ENCODE measurements at regions of chr3 and their contacts with region 1.

Region 1: GRCh38 chr3:188006726-188007393 is 147.1 kb upstream of the LPP start:
- DNase-seq: peak; percentile 57
- ATAC-seq: peak; percentile 96
- H3K4me3 ChIP-seq: no peak overlapping the region
- H3K4me3 Mint-ChIP-seq: no peak overlapping the region
- H3K27ac ChIP-seq: no peak overlapping the region
- H3K27ac Mint-ChIP-seq: no peak overlapping the region
- H3K4me1 ChIP-seq: peaks cover 7 to 8% of the 10 kb centered on the region in 2 donors
- H3K4me1 Mint-ChIP-seq: peaks cover 7% of the 10 kb centered on the region
- H3K27me3 ChIP-seq: no peaks in the 10 kb centered on the region
- H3K27me3 Mint-ChIP-seq: no peaks in the 10 kb centered on the region
- CTCF ChIP-seq: no peak

Region 2: DNA sequence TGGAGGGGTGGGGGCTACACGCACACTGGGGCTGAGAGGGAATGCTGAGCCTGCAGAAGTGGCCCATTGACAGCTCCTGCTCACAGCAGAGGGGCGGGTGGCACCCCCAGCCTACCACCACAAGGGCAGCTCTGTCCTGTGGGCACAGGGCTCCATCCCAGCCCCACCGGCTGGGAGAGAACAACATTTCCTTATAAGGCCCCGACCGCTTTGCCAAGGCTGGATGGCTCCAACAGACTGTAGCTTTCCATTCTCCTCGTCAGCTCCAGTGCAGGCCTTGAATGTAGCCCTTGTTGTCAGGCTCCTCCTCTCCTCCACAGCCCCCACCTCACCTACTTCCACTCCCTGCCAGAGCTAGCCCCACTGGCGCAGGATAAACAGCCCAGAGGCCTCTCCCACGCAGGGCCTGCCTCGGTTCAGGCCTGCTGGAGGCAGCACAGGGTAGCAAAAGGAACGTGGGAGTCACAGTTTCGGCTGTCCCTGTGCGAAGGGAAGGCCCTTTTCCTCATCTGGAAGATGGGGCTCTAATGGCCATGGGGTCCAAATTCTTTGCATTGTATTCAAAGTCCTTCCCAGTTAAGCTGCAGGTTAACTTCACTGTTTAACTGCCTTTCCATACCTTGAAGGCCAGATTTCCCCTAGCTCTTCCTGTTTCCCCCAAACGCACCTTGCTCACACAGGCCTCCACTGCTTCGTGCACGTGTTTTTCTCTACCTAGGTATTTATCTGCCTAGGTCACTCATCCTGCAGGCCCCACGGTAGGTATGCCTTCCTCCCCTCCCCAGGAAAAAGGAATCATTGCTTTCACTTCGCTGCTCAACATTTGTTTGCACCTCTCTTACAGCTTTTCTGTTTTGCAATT is 45.5 kb after region 1 on chr3:
- CTCF ChIA-PET with region 1: no interaction called
- POLR2A ChIA-PET with region 1: interaction called, 11 read pairs
- intact Hi-C with region 1: no loop called
- DNase-seq: no peak
- ATAC-seq: no peak
- H3K4me3 ChIP-seq: no peak overlapping the region
- H3K4me3 Mint-ChIP-seq: no peak overlapping the region
- H3K27ac ChIP-seq: no peak overlapping the region
- H3K27ac Mint-ChIP-seq: no peak overlapping the region
- H3K4me1 ChIP-seq: peaks cover 11 to 14% of the 10 kb centered on the region in 2 donors
- H3K4me1 Mint-ChIP-seq: peaks cover 12% of the 10 kb centered on the region
- H3K27me3 ChIP-seq: peaks cover 0 to 3% (median 0%) of the 10 kb centered on the region in 4 experiments
- H3K27me3 Mint-ChIP-seq: no peaks in the 10 kb centered on the region
- CTCF ChIP-seq: no peak